GM10248 (cell line): ENCODE measurements at regions of chr9 and their contacts with region 1.

Region 1: GRCh38 chr9:133144137-133144903 is 19.4 kb downstream of the GBGT1 start:
- DNase-seq: peak; percentile 89
- CTCF ChIP-seq: peak; percentile 96

Region 2: GRCh38 chr9:133042676-133043075 is 101.6 kb before region 1 on chr9:
- CTCF ChIA-PET with region 1: interaction called, 16 read pairs
- POLR2A ChIA-PET with region 1: no interaction called
- DNase-seq: no peak
- CTCF ChIP-seq: no peak

Region 3: GRCh38 chr9:133048569-133048968 is 95.8 kb before region 1 on chr9:
- CTCF ChIA-PET with region 1: interaction called, 16 read pairs
- POLR2A ChIA-PET with region 1: no interaction called
- DNase-seq: peak; percentile 56
- CTCF ChIP-seq: peak; percentile 51

Region 4: GRCh38 chr9:133098104-133098890 is 46.0 kb before region 1 on chr9:
- CTCF ChIA-PET with region 1: interaction called, 473 read pairs
- POLR2A ChIA-PET with region 1: no interaction called
- DNase-seq: no peak
- CTCF ChIP-seq: no peak

Region 5: DNA sequence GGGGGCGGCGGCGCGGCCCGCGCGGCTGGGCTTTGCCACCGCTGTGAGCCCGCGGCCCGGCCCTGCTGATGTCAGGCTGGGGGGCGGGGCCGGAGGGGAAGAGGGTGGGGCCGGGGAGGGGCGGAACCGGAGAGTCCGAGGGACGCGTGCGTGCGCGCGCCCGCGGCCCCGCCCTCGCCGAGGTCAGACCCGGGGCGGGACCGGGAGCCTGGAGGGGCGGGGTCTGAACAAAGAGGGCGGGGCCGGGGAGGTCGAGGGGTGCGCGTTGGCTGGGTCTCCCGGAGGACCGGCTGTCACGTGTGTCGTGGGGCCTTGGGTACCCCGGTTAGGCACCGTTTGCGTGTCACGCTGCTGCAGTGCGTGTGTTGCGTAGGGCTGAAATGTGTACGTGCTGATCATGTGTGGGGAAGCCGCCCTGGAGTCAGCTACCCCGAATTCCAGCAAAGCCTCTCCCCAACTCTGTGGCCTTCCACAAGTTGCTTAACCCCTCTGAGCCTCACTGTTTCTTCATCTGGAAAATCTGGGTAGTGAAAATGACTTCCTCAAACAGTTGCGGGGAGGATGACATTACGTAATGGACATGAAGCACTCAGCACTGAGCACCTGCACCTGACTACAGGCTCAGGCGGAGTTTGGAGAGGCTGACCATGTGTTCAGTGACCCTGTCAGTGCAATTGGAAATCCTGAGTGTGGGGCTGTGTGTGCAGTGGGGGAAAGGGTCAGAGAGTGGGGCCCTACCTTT is 23.0 kb before region 1 on chr9 and contains the start of gene RALGDS:
- CTCF ChIA-PET with region 1: interaction called, 473 read pairs
- POLR2A ChIA-PET with region 1: interaction called, 7 read pairs
- DNase-seq: peak; percentile 97
- CTCF ChIP-seq: no peak

Region 6: DNA sequence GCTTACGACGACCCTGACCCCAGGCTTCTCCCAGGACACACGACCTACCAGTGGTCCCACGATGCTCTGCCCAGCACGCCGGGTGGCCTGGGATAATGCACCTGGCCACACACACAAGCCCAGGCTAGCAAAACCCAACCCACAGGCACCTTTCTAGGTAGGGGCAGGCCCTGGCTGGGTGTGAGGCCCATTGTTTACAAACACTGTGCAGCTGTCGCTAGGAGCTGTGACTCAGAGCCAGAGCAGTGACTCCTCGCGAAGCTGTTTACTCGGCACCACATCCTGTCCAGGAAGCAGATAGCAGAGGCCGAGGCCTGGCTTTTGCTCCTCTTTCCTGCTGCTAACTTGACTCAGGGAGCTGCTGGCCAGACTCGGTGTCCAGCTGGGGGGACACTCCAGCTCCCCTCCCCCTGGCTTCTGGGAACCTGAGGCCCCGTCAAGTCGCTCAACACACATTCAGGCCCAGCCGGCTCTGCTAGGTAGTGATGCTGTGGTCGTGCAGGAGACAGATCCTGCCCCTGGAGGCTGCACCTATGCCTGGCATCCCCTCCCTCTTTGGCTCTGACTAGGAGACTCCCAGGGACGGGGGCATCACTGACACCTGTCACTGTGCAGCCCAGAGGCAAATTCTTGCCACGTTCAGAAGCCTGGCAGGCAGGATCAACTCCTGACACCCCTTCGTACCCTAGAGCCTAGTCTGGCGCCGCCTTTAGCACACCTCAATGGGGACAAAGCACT is 10.5 kb before region 1 on chr9:
- CTCF ChIA-PET with region 1: interaction called, 257 read pairs
- POLR2A ChIA-PET with region 1: interaction called, 11 read pairs
- DNase-seq: peak; percentile 93
- CTCF ChIP-seq: no peak

Region 7: GRCh38 chr9:133194597-133194996 is 50.3 kb after region 1 on chr9:
- CTCF ChIA-PET with region 1: no interaction called
- POLR2A ChIA-PET with region 1: no interaction called
- DNase-seq: no peak
- CTCF ChIP-seq: no peak